ENCODE measurements at regions of chr15 and their contacts with region 1.

Region 1: DNA sequence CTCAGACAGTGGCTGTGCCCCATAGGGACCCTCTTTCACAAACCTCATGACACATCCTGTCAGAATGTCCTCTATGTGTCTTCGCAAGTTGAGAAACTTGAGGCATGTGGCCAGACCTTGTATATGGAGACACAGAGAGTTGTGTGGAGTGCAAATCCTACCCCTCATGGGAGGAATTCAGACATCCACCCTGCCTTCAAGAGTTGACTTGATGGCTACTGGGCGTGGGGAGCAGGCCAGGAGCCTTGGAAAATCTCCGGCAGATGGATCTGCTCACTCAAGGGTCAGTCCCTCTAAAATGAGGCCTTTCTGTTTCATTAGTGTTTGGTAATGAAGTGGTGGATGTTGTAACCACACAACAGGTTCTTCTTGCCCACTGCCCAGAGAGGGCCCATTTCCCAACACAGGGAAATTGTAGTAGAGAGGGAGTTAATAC is 78.9 kb downstream of the ASB7 start:
- DNase-seq: no peak
- H3K4me3 ChIP-seq: no peak overlapping the region
- H3K27ac ChIP-seq: no peak overlapping the region
- H3K4me1 ChIP-seq: peaks cover 23% of the 10 kb centered on the region
- H3K27me3 ChIP-seq: no peaks in the 10 kb centered on the region
- CTCF ChIP-seq: no peak

Region 2: GRCh38 chr15:100757661-100758060 is 76.3 kb after region 1 on chr15:
- CTCF ChIA-PET with region 1: no interaction called
- POLR2A ChIA-PET with region 1: no interaction called
- intact Hi-C with region 1: no loop called
- DNase-seq: no peak
- H3K4me3 ChIP-seq: no peak overlapping the region
- H3K27ac ChIP-seq: no peak overlapping the region
- H3K4me1 ChIP-seq: peaks cover 42% of the 10 kb centered on the region
- H3K27me3 ChIP-seq: no peaks in the 10 kb centered on the region
- CTCF ChIP-seq: no peak

Region 3: GRCh38 chr15:100873029-100873677 is 191.8 kb after region 1 on chr15:
- CTCF ChIA-PET with region 1: interaction called, 13 read pairs
- POLR2A ChIA-PET with region 1: no interaction called
- intact Hi-C with region 1: no loop called
- DNase-seq: peak; percentile 65 to 87
- H3K4me3 ChIP-seq: no peak overlapping the region
- H3K27ac ChIP-seq: no peak overlapping the region
- H3K4me1 ChIP-seq: peaks cover 17% of the 10 kb centered on the region
- H3K27me3 ChIP-seq: no peaks in the 10 kb centered on the region
- CTCF ChIP-seq: peak; percentile 95